CD4-positive, alpha-beta T cell (primary cell): ENCODE measurements at regions of chr13 and their contacts with region 1.

Region 1: GRCh38 chr13:73984949-73985691 is 149.1 kb downstream of the KLF12 start:
- DNase-seq: peak; percentile 64 to 94 (median 78)
- ATAC-seq: peak; percentile 90
- H3K4me3 ChIP-seq: peak overlapping the region; percentile 25
- H3K4me3 Mint-ChIP-seq: peak overlapping the region; percentile 85
- H3K27ac ChIP-seq: peak overlapping the region; percentile 42 to 61
- H3K27ac Mint-ChIP-seq: no peak overlapping the region
- H3K4me1 ChIP-seq: peaks cover 33% of the 10 kb centered on the region
- H3K4me1 Mint-ChIP-seq: peaks cover 50% of the 10 kb centered on the region
- H3K27me3 ChIP-seq: no peaks in the 10 kb centered on the region
- H3K27me3 Mint-ChIP-seq: no peaks in the 10 kb centered on the region
- CTCF ChIP-seq: no peak

Region 2: GRCh38 chr13:73849292-73849691 is 135.8 kb before region 1 on chr13:
- CTCF ChIA-PET with region 1: no interaction called
- POLR2A ChIA-PET with region 1: no interaction called
- intact Hi-C with region 1: loop called in 1 of 2 experiments (anchors 5 kb)
- DNase-seq: peak in 5 of 14 experiments; percentile 13 to 61 (median 53)
- ATAC-seq: peak; percentile 63
- H3K4me3 ChIP-seq: no peak overlapping the region
- H3K4me3 Mint-ChIP-seq: no peak overlapping the region
- H3K27ac ChIP-seq: no peak overlapping the region
- H3K27ac Mint-ChIP-seq: peak overlapping the region; percentile 22
- H3K4me1 ChIP-seq: peaks cover 5% of the 10 kb centered on the region
- H3K4me1 Mint-ChIP-seq: peaks cover 67% of the 10 kb centered on the region
- H3K27me3 ChIP-seq: no peaks in the 10 kb centered on the region
- H3K27me3 Mint-ChIP-seq: no peaks in the 10 kb centered on the region
- CTCF ChIP-seq: peak; percentile 74

Region 3: DNA sequence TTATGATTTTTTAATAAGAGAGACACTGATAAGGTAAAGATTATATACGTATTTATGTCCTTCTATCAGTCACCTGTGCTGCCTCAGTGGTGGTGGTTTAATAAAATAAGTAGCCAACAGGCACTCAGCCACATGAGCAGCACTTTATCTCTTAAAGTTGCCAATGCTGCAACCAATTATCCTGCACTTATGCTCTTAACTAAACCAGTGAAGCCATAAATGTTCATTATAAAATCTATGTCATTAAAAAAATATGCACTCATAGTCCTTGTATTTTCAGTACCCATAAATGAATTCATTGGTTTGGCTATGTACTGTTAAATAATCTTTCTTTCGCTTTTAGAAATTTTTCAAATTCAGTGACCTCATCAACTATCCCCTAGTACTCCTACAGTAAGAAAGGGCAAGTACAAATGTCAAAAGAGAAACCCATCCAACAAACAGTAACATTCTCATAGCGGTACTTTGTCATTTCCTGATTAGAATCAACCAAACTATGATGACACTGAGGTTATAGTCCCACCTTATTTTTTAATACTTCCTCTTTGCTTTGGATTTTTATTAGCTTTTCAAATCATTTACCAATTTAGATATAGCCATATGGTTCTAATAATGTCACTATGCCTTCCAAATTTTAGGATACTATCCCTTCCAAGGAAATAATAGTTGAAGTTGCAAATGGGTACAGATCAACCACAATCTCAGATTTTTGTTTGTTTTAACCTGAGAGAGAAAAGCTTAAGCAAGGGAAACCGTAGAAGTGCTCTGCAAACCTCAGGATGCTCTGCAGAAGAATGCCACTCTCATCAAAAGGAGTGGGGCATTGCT is 41.8 kb before region 1 on chr13:
- CTCF ChIA-PET with region 1: no interaction called
- POLR2A ChIA-PET with region 1: interaction called, 3 read pairs
- intact Hi-C with region 1: loop called in 1 of 2 experiments (anchors 5 kb)
- DNase-seq: peak in 3 of 14 experiments; percentile 56 to 83 (median 60)
- ATAC-seq: peak; percentile 92
- H3K4me3 ChIP-seq: no peak overlapping the region
- H3K4me3 Mint-ChIP-seq: peak overlapping the region; percentile 47
- H3K27ac ChIP-seq: peak overlapping the region; percentile 57 to 82
- H3K27ac Mint-ChIP-seq: peak overlapping the region; percentile 87
- H3K4me1 ChIP-seq: peaks cover 34% of the 10 kb centered on the region
- H3K4me1 Mint-ChIP-seq: peaks cover 89% of the 10 kb centered on the region
- H3K27me3 ChIP-seq: no peaks in the 10 kb centered on the region
- H3K27me3 Mint-ChIP-seq: no peaks in the 10 kb centered on the region
- CTCF ChIP-seq: no peak

Region 4: GRCh38 chr13:73998631-73999030 is 13.5 kb after region 1 on chr13:
- CTCF ChIA-PET with region 1: interaction called, 3 read pairs
- POLR2A ChIA-PET with region 1: interaction called, 13 read pairs
- intact Hi-C with region 1: loop called in 1 of 2 experiments (anchors 2 kb)
- DNase-seq: peak in 2 of 14 experiments; percentile 30 to 37
- ATAC-seq: peak; percentile 77
- H3K4me3 ChIP-seq: no peak overlapping the region
- H3K4me3 Mint-ChIP-seq: peak overlapping the region; percentile 46
- H3K27ac ChIP-seq: no peak overlapping the region
- H3K27ac Mint-ChIP-seq: peak overlapping the region; percentile 78
- H3K4me1 ChIP-seq: peaks cover 4% of the 10 kb centered on the region
- H3K4me1 Mint-ChIP-seq: peaks cover 88% of the 10 kb centered on the region
- H3K27me3 ChIP-seq: no peaks in the 10 kb centered on the region
- H3K27me3 Mint-ChIP-seq: no peaks in the 10 kb centered on the region
- CTCF ChIP-seq: no peak

Region 5: DNA sequence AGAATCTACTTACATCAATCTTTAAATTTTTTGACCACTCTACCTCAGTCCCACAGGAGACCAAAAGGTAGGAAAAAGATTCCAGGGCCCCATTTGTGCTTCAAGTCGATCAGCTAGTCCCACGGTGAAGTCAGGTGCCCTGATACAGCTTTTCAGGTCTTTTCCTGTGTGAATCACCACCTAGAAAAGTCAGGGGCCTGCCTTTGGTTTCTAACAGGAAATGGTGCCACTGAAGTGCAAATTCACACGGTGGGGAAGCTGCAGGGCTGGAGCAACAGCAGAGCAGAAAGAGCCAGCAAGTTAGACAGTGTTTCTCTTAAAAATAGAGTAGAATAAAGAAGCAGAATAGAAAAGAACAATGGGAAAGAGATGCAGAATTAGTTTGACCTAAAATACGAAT is 41.6 kb after region 1 on chr13:
- CTCF ChIA-PET with region 1: interaction called, 3 read pairs
- POLR2A ChIA-PET with region 1: interaction called, 21 read pairs
- intact Hi-C with region 1: loop called (anchors 2 to 5 kb)
- DNase-seq: peak; percentile 44 to 88 (median 66)
- ATAC-seq: peak; percentile 95
- H3K4me3 ChIP-seq: peak overlapping the region; percentile 29
- H3K4me3 Mint-ChIP-seq: peak overlapping the region; percentile 82
- H3K27ac ChIP-seq: peak overlapping the region; percentile 66 to 78
- H3K27ac Mint-ChIP-seq: peak overlapping the region; percentile 89
- H3K4me1 ChIP-seq: peaks cover 11% of the 10 kb centered on the region
- H3K4me1 Mint-ChIP-seq: peaks cover 90% of the 10 kb centered on the region
- H3K27me3 ChIP-seq: no peaks in the 10 kb centered on the region
- H3K27me3 Mint-ChIP-seq: no peaks in the 10 kb centered on the region
- CTCF ChIP-seq: no peak

Region 6: DNA sequence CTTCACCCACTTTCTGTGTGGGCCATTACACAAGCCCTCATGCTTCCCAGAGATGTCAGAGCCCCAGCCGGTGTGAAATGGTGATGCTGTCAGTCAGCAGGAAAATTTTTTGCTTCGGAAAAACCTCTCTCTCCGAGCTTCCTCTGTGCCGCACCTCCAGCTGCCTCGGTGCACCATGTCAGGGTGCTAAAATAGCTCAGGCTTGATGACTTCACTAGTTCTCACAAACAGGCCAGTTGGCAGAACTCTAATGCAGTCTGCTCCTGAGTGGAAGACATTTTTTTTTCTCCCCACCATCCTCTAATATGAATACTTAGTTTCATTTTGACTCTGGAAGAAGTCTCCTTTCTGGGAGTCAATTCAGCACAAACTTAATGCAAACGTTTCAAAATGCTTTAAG is 77.8 kb after region 1 on chr13:
- CTCF ChIA-PET with region 1: no interaction called
- POLR2A ChIA-PET with region 1: interaction called, 5 read pairs
- intact Hi-C with region 1: loop called in 1 of 2 experiments (anchors 2 kb)
- DNase-seq: peak in 4 of 14 experiments; percentile 10 to 65 (median 34)
- ATAC-seq: peak; percentile 9
- H3K4me3 ChIP-seq: peak overlapping the region; percentile 24
- H3K4me3 Mint-ChIP-seq: peak overlapping the region; percentile 35
- H3K27ac ChIP-seq: peak overlapping the region; percentile 48 to 70
- H3K27ac Mint-ChIP-seq: peak overlapping the region; percentile 80
- H3K4me1 ChIP-seq: peaks cover 37% of the 10 kb centered on the region
- H3K4me1 Mint-ChIP-seq: peaks cover 89% of the 10 kb centered on the region
- H3K27me3 ChIP-seq: no peaks in the 10 kb centered on the region
- H3K27me3 Mint-ChIP-seq: no peaks in the 10 kb centered on the region
- CTCF ChIP-seq: no peak

Region 7: DNA sequence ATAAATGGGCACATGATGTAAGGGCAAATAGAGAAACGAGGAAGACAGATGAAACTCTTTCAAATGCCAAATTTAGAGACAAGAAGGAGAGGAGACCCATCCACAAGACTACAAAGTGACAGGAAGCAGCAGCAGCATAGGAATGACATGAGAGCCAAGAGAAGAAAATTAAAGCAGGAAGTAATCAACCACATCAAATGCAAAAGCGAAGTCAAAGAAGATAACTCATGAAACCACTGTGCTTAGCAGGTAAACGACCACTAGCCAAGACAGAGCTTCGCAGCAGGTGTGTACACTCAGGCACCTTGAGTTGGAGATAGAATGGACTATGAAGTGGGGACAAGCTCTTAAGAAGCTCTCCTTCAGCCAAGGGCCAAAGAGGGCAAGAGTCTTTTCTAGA is 84.9 kb after region 1 on chr13:
- CTCF ChIA-PET with region 1: no interaction called
- POLR2A ChIA-PET with region 1: interaction called, 12 read pairs
- intact Hi-C with region 1: no loop called
- DNase-seq: peak in 10 of 14 experiments; percentile 6 to 86 (median 33)
- ATAC-seq: peak; percentile 85
- H3K4me3 ChIP-seq: peak overlapping the region; percentile 1
- H3K4me3 Mint-ChIP-seq: peak overlapping the region; percentile 73
- H3K27ac ChIP-seq: peak overlapping the region; percentile 17 to 36
- H3K27ac Mint-ChIP-seq: peak overlapping the region; percentile 80
- H3K4me1 ChIP-seq: peaks cover 55% of the 10 kb centered on the region
- H3K4me1 Mint-ChIP-seq: peaks cover 83% of the 10 kb centered on the region
- H3K27me3 ChIP-seq: no peaks in the 10 kb centered on the region
- H3K27me3 Mint-ChIP-seq: no peaks in the 10 kb centered on the region
- CTCF ChIP-seq: no peak